AG04450 (cell line): ENCODE measurements at regions of chr11 and their contacts with region 1.

Region 1: GRCh38 chr11:124070915-124071635 is 29.9 kb upstream of the OR10G7 start:
- DNase-seq: peak; percentile 67
- H3K4me3 ChIP-seq: no peak overlapping the region
- H3K27ac ChIP-seq: no peak overlapping the region
- H3K27me3 ChIP-seq: peaks cover 3% of the 10 kb centered on the region
- CTCF ChIP-seq: peak; percentile 78

Region 2: GRCh38 chr11:123859731-123860130 is 211.3 kb before region 1 on chr11:
- CTCF ChIA-PET with region 1: no interaction called
- POLR2A ChIA-PET with region 1: no interaction called
- DNase-seq: no peak
- H3K4me3 ChIP-seq: no peak overlapping the region
- H3K27ac ChIP-seq: no peak overlapping the region
- H3K27me3 ChIP-seq: no peaks in the 10 kb centered on the region
- CTCF ChIP-seq: no peak

Region 3: GRCh38 chr11:124052966-124053365 is 18.1 kb before region 1 on chr11:
- CTCF ChIA-PET with region 1: interaction called, 13 read pairs
- POLR2A ChIA-PET with region 1: no interaction called
- DNase-seq: no peak
- H3K4me3 ChIP-seq: no peak overlapping the region
- H3K27ac ChIP-seq: no peak overlapping the region
- H3K27me3 ChIP-seq: no peaks in the 10 kb centered on the region
- CTCF ChIP-seq: no peak

Region 4: DNA sequence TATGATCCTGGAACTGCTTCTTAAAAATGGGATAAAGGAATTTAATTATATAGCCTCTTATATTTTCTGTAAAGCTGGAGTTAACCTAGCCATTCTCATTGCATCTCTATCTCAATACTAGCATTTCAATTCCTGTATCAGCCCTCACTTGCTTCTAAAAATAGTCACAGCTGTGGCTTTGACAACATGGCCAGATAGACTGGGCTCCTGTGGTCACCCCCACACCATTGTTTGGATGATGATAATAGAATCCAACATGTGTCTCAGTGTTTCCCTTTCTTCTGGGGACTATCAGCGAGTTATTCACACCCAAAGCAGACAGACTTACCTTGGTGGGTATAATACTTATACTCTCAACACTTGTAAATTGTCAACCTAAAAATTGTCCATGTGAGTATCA is 51.0 kb after region 1 on chr11:
- CTCF ChIA-PET with region 1: interaction called, 11 read pairs
- POLR2A ChIA-PET with region 1: no interaction called
- DNase-seq: no peak
- H3K4me3 ChIP-seq: no peak overlapping the region
- H3K27ac ChIP-seq: no peak overlapping the region
- H3K27me3 ChIP-seq: no peaks in the 10 kb centered on the region
- CTCF ChIP-seq: no peak

Region 5: GRCh38 chr11:124322356-124322755 is 251.3 kb after region 1 on chr11:
- CTCF ChIA-PET with region 1: interaction called, 16 read pairs
- POLR2A ChIA-PET with region 1: no interaction called
- DNase-seq: no peak
- H3K4me3 ChIP-seq: no peak overlapping the region
- H3K27ac ChIP-seq: no peak overlapping the region
- H3K27me3 ChIP-seq: no peaks in the 10 kb centered on the region
- CTCF ChIP-seq: no peak

Region 6: GRCh38 chr11:124402326-124402922 is 331.3 kb after region 1 on chr11:
- CTCF ChIA-PET with region 1: interaction called, 76 read pairs
- POLR2A ChIA-PET with region 1: no interaction called
- DNase-seq: peak; percentile 74
- H3K4me3 ChIP-seq: no peak overlapping the region
- H3K27ac ChIP-seq: no peak overlapping the region
- H3K27me3 ChIP-seq: no peaks in the 10 kb centered on the region
- CTCF ChIP-seq: peak; percentile 88